Heart right ventricle (tissue), 16 donors: ENCODE measurements at regions of chr14 and their contacts with region 1.

Region 1: DNA sequence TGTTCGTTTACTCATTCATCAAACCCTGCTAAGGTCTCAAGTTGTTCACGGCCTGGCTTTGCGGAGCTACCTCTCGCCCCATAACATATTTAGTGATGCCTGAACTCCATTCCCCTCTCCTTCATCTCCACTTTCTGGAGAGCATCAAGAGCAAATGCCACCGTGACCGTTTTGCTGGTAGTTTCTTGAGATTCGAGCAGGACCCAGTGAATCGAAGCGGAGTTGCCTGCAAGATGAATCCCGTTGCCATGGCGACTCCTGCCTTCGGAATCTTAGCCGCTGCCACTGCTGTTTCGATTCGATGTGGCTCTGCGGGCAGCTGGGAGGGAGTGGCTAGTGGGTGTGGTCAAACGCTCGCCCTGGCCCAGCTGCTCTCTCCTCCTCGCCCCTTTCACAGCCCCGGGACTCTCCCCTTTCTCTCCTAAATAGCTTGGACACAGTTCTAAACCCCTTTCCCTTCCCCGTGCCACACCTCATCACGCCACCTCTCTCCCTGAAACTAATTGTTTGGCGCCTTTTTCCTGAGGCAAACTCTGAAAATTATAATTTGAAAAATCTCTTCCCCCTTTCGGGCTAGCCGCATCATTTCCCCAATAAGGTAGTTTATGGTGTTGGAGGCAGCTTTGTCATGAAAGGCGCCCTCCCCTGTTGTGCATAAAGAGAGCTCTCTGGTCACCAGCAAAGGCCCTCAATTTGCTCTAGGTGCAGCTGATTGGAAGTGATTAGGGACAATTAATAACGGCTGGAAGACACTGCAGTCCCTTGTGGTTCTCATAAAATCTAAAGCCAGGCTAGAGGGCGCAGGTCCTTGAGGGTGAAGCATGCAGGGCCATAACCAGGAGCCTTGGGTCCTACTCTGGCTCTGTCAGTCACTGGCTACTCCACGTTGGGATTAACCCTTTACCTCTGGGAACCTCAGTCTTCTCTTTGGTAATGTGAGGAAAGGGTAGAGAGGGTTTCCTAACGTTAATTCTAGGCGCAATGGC is 1.6 kb downstream of the DAAM1 start:
- DNase-seq: peak; percentile 78 to 84
- ATAC-seq: peak in 7 of 8 donors; percentile 23 to 54 (median 35)
- H3K4me3 ChIP-seq: peak overlapping the region; percentile 76 to 97 (median 86)
- H3K27ac ChIP-seq: peak overlapping the region; percentile 88 to 96 (median 92)
- H3K4me1 ChIP-seq: peaks cover 16 to 60% (median 48%) of the 10 kb centered on the region in 9 donors
- H3K27me3 ChIP-seq: no peaks in the 10 kb centered on the region
- CTCF ChIP-seq: peak in 3 of 9 donors; percentile 15 to 35 (median 23)

Region 2: DNA sequence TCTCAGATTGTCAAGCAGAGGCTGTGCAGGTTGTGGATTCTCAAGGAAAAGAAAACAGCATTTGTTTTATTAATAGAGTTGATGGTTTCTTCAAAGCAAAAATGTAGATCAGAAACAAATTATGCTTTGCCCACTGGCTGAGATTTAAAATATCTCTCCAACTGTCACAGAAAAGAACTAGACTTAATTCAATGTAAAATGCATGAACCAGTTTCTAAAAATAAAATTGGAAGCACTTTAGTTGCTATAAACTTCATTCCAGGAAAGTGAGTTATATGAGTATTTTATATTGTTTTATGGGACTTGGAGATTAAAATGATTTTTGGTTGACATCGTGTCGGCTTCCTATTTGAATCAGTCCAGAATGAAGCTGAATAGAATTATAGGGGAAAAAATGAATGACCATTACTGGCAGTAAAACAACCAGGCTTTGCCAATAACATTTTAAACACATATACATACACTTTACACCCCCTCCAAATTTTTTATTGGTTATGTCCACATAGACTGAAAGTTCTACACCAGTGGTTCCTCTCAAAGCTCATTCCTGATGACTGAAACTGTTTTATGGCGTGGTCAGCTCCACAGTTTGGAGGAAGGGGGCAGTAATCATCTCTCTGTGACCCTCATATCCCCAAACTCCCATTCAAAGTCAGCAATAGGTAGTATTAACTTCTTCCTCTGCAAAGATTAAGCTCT is 57.1 kb before region 1 on chr14:
- intact Hi-C with region 1: loop called in 4 of 10 experiments (anchors 5 to 10 kb)
- DNase-seq: no peak
- ATAC-seq: peak in 3 of 8 donors; percentile 28 to 41 (median 39)
- H3K4me3 ChIP-seq: no peak overlapping the region
- H3K27ac ChIP-seq: no peak overlapping the region
- H3K4me1 ChIP-seq: peaks cover 0 to 13% (median 0%) of the 10 kb centered on the region in 9 donors
- H3K27me3 ChIP-seq: no peaks in the 10 kb centered on the region
- CTCF ChIP-seq: peak in 5 of 9 donors; percentile 8 to 33 (median 28)

Region 3: DNA sequence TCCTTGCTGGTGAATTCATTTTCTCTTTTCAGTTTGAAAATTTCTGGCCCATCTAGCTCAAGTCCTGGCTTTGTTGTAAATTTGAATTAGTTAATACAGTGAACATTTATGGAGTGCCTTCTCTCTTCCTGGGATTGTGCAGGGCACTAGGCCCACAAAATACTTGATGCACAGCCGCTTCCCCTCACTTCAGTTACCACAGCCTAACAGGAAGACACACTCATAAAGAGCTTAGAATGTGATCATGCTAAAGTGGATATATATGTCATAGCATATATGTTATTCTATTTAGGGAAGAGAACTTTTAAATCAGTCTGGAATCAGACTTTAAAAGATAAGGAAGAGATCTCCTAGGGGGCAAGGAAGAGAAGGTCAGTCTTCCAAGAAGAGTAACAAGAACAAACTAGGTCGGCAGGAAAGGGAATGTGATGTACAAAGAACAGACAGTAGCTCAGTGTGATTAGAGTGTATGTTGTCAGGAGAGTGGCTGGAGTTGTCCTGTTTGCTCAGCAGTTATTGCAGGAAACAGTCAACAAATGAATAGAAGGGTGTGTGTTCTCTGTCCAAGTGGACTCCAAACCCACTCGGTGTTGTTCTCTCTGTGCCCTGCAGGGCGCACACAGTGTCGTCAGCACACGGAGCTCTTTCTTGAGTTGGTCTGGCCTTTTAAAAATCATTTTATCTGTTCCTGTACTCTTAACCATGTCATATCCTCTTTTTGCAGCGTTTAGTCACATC is 72.8 kb after region 1 on chr14:
- intact Hi-C with region 1: loop called in 3 of 10 experiments (anchors 5 to 10 kb)
- DNase-seq: no peak
- ATAC-seq: peak; percentile 6 to 75 (median 54)
- H3K4me3 ChIP-seq: no peak overlapping the region
- H3K27ac ChIP-seq: peak overlapping the region in 3 of 10 donors; percentile 4 to 38 (median 27)
- H3K4me1 ChIP-seq: peaks cover 4 to 38% (median 15%) of the 10 kb centered on the region in 9 donors
- H3K27me3 ChIP-seq: no peaks in the 10 kb centered on the region
- CTCF ChIP-seq: peak in 7 of 9 donors; percentile 7 to 43 (median 32)

Region 4: GRCh38 chr14:59320763-59321640 is 130.9 kb after region 1 on chr14:
- intact Hi-C with region 1: loop called in 2 of 10 experiments (anchors 2 to 10 kb)
- DNase-seq: no peak
- ATAC-seq: peak; percentile 62 to 87 (median 80)
- H3K4me3 ChIP-seq: peak overlapping the region in 1 of 10 donors; percentile 3
- H3K27ac ChIP-seq: peak overlapping the region; percentile 26 to 87 (median 76)
- H3K4me1 ChIP-seq: peaks cover 10 to 76% (median 57%) of the 10 kb centered on the region in 9 donors
- H3K27me3 ChIP-seq: no peaks in the 10 kb centered on the region
- CTCF ChIP-seq: no peak

Region 5: DNA sequence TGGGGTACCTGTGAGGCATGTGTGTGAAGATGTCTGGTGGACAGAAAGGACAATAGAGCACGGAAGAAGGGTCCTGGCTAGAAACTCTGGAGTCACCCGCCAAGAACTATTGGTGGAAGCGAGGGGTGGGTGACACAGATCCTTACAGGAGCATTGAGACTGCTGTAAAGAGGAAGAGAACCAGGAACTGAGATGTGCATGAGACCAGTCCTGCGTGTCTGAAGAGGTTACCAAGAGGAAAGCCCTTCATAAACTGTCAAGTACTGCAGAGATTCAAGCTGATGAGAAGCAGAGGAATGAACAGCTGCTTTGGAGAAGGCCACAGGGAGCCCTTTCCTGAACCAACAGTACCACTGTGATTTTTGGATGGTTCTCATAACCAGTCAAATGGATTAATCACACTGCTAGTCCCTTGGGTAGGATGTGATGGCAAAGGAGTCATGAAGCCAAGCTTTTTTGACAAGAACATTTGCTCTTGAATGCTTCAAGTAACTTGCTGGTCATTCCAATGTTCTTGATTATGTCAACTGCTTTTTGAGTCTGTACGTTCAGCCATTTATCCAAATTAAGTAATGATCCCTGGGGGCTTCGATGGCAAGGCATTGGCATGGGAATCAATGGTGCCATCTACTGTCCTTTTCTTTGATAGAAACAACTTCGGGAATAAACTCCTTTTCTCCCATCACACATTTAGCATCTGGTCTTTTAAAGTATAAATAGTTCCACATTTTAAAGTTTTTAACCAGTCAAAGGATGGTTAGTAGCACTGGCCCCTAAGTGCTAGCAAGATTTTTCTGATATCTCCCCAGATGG is 232.2 kb after region 1 on chr14:
- intact Hi-C with region 1: loop called in 4 of 10 experiments (anchors 5 kb)
- DNase-seq: no peak
- ATAC-seq: peak in 3 of 8 donors; percentile 9 to 18 (median 13)
- H3K4me3 ChIP-seq: no peak overlapping the region
- H3K27ac ChIP-seq: peak overlapping the region in 6 of 10 donors; percentile 5 to 32 (median 28)
- H3K4me1 ChIP-seq: peaks cover 0 to 71% (median 42%) of the 10 kb centered on the region in 9 donors
- H3K27me3 ChIP-seq: no peaks in the 10 kb centered on the region
- CTCF ChIP-seq: peak in 6 of 9 donors; percentile 17 to 56 (median 38)